ENCODE measurements at regions of chr18 and their contacts with region 1.

Region 1: DNA sequence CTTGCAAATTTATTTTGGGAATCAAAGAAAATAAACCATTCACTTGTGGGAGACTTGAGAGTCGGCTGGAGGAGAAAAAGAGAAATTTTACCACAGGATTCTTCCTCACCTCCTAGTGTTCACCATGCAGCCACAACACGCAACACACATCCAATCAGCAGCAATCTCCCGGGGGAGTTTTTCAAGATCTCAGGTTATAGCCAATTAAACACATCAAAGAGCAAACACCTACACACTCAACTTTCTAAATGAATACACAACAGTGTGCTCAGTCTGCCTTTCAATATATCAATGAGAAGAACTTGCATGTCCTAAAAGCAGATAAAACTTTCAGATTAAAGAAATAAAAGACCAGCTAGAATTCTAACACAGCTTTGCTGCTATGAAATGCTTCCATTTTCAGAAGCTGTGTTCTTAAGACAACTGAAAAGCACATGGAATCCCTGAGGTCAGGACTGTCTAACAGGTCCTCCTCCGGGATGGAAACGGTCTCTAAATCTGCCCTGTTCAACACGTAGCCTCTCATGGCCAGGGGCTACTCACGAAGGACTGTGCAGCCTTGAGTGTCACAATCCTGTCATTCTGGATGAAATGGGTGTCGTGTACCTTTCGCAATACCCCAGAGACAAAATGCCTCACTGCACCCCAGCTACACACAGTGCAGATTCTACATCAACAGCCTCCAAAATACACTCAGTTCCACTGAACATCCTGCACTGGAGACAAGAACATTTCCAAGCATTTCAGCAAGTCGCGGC is 84.2 kb downstream of the ZNF516 start:
- DNase-seq: no peak

Region 2: DNA sequence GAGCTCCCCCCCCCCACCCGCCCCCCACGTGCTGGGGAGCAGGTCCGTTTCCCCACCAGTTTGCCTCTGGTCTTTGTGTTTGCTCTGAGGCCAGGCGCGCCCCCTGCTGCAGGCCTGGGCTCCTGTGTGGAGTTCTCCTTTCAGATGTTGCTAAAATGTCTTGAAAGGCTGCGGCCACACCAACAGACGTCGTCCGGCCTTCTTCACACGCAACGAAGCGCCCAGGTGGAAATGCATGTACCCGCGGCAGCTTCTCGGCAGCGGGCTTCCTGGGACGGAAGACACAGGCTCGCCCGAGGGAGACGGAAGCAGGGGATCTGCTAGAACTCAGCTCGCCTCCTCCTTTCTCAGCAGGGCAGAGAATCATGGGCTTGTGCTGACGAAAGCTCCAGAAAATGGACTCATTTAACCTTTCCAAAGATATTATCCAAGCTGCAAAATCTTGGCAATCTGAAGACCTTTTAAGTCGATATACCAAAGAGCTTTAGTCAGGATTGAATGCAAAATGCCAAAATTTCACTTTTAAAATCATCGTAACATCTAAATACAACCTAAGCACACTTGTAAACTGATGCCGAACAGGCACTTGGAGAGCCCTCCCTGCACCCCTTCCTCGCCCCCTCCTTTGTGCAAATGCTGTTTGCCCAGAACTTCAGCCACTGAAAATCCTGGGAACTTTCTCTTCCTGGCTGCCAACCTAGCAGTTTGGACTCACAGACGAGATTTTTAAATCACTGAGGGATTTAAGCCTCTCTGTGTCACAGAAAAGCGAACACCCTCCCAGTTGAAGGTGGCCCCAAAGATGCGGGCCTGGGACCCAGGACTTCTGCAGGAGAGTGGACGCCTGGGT is 209.7 kb after region 1 on chr18:
- intact Hi-C with region 1: loop called (anchors 5 kb)
- DNase-seq: peak; percentile 84

Measured in cardiac septum (tissue), 1 donor.